Endothelial cell of umbilical vein (primary cell): ENCODE measurements at regions of chr6 and their contacts with region 1.

Region 1: DNA sequence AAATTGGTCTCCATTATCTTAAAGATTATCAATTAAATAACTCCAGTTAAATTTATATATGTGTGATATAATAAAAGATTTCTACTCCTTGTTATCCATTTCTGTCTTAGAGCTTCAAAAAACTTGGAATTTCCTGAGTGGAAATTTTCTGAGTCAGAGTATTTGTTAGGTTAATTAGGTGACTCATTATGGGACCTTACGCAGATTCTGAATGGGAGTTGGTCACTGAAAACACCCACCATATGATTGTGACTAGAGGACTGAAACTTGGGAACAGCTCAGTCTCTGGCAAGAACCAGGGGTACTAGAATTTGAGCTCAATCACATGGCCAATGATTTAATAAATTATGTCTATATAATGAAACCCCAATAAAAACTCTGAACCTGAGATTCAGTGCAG is 125.4 kb upstream of the HMGCLL1 start:
- DNase-seq: peak; percentile 84
- H3K4me3 ChIP-seq: no peak overlapping the region
- H3K27ac ChIP-seq: peak overlapping the region; percentile 28
- H3K4me1 ChIP-seq: peaks cover 15% of the 10 kb centered on the region
- H3K27me3 ChIP-seq: no peaks in the 10 kb centered on the region
- CTCF ChIP-seq: no peak
- POLR2A ChIP-seq: no peak

Region 2: DNA sequence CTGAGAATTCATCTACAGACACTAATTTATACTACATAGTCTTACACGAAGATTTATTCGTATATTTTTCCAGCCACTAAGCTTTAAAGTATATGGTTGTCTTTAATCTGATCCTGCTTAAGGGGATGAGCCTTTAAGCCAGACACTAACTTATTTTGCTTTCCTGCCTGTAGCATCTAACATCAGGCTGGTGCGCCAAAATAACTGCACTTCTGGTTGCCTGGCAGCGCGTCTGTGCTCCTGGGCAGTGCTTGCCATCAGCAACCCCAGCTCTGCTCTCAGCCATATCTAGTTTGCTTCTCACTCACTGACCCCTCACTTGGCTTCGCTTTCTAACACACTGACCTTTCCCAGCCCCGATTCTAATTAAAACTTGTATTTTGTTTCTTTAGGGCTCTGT is 147.3 kb before region 1 on chr6:
- CTCF ChIA-PET with region 1: no interaction called
- POLR2A ChIA-PET with region 1: no interaction called
- dilution Hi-C with region 1: no loop called
- intact Hi-C with region 1: no loop called
- DNase-seq: no peak
- H3K4me3 ChIP-seq: no peak overlapping the region
- H3K27ac ChIP-seq: no peak overlapping the region
- H3K4me1 ChIP-seq: no peaks in the 10 kb centered on the region
- H3K27me3 ChIP-seq: no peaks in the 10 kb centered on the region
- CTCF ChIP-seq: no peak
- POLR2A ChIP-seq: no peak

Region 3: DNA sequence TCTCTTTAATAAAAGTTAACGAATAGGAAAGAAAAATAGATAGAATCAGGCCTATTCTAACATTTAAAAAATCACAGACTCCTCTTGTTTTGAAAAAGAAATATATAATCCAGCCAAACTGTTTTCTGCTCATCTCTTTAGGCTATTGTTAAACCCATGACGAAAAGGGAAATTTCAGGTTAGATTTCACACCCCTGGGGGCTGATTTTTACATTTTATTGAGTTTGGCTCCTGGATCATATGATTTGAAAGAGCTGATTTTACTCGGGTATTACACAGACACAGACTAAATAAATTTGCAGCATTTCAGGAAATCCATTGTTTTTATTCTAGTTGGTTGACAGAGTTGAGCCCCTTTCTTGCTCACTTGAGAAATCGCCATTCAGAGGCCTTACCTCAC is 10.4 kb after region 1 on chr6:
- CTCF ChIA-PET with region 1: interaction called, 14 read pairs
- POLR2A ChIA-PET with region 1: no interaction called
- dilution Hi-C with region 1: no loop called
- intact Hi-C with region 1: no loop called
- DNase-seq: no peak
- H3K4me3 ChIP-seq: no peak overlapping the region
- H3K27ac ChIP-seq: no peak overlapping the region
- H3K4me1 ChIP-seq: no peaks in the 10 kb centered on the region
- H3K27me3 ChIP-seq: no peaks in the 10 kb centered on the region
- CTCF ChIP-seq: no peak
- POLR2A ChIP-seq: no peak

Region 4: GRCh38 chr6:55886185-55886836 is 181.9 kb after region 1 on chr6:
- CTCF ChIA-PET with region 1: interaction called, 3 read pairs
- POLR2A ChIA-PET with region 1: interaction called, 3 read pairs
- dilution Hi-C with region 1: no loop called
- intact Hi-C with region 1: loop called (anchors 5 kb)
- DNase-seq: peak; percentile 30
- H3K4me3 ChIP-seq: no peak overlapping the region
- H3K27ac ChIP-seq: no peak overlapping the region
- H3K4me1 ChIP-seq: peaks cover 18% of the 10 kb centered on the region
- H3K27me3 ChIP-seq: no peaks in the 10 kb centered on the region
- CTCF ChIP-seq: peak in 1 of 2 donors; percentile 13
- POLR2A ChIP-seq: no peak